ENCODE measurements at regions of chr11 and their contacts with region 1.

Region 1: DNA sequence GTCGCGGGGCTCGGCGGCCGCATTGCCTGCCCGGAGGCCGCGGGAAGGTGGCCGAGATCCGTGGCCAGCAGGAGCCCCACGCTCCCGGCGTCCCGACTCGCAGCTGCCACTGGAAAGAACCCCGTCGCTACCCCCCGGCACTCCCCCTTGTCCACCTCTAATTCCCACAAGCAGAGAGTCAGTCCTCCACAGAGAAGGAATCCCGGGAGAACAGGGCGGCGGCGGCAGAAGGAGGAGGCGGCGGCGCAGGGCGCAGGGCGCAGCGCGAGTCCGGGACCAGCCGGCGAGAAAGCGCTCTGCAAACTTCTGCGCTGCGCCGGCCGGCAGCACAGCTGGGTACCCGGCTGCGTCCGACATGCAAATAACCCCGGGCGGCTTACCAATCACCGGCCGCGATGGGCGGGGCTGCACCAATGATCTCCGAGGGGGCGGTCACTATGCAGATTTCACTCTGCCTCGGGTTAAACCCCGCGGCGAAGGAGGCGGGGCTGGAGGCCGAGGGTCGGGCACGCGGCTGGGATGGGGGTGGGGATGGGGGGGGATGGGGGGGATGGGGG is at the start of gene ABTB2:
- DNase-seq: peak; percentile 98
- H3K4me3 Mint-ChIP-seq: peak within 1 kb of the TSS; percentile 74
- H3K27ac Mint-ChIP-seq: peak within 1 kb of the TSS; percentile 74
- H3K4me1 Mint-ChIP-seq: peaks cover 29% of the 10 kb centered on the region
- H3K27me3 Mint-ChIP-seq: peaks cover 46% of the 10 kb centered on the region
- total RNA-seq, gene ABTB2: 2.3 to 2.7 TPM

Region 2: GRCh38 chr11:34250732-34251639 is 106.8 kb before region 1 on chr11:
- CTCF ChIA-PET with region 1: interaction called, 9 read pairs
- POLR2A ChIA-PET with region 1: interaction called, 33 read pairs
- DNase-seq: peak; percentile 82
- H3K4me3 Mint-ChIP-seq: peak overlapping the region; percentile 9
- H3K27ac Mint-ChIP-seq: peak overlapping the region; percentile 33
- H3K4me1 Mint-ChIP-seq: peaks cover 58% of the 10 kb centered on the region
- H3K27me3 Mint-ChIP-seq: peaks cover 14% of the 10 kb centered on the region

Measured in activated CD4-positive, alpha-beta memory T cell treated with anti-CD3 and anti-CD28 coated beads, Interleukin-2, amount 10 ng/mL, durations not matched to agents 7 days and 5 days (primary cell).